Endothelial cell of umbilical vein (primary cell): ENCODE measurements at regions of chr12 and their contacts with region 1.

Region 1: GRCh38 chr12:57782608-57783465 is at the start of gene TSFM:
- DNase-seq: peak; percentile 93
- H3K4me3 ChIP-seq: peak within 1 kb of the TSS; percentile 40 to 63 (median 52)
- H3K27ac ChIP-seq: peak within 1 kb of the TSS; percentile 1
- H3K4me1 ChIP-seq: peaks cover 7% of the 10 kb centered on the region
- H3K27me3 ChIP-seq: no peaks in the 10 kb centered on the region
- CTCF ChIP-seq: peak; percentile 91
- POLR2A ChIP-seq: peak; percentile 82
- total RNA-seq, gene TSFM: 39.3 and 41.8 TPM in 2 replicates

Region 2: GRCh38 chr12:57751788-57752667 is 30.8 kb before region 1 on chr12 and contains the start of gene CDK4:
- CTCF ChIA-PET with region 1: interaction called, 12 read pairs
- POLR2A ChIA-PET with region 1: no interaction called
- dilution Hi-C with region 1: no loop called
- intact Hi-C with region 1: no loop called
- DNase-seq: peak; percentile 100
- H3K4me3 ChIP-seq: peak within 1 kb of the TSS; percentile 19 to 78 (median 61)
- H3K27ac ChIP-seq: peak within 1 kb of the TSS; percentile 68
- H3K4me1 ChIP-seq: peaks cover 17% of the 10 kb centered on the region
- H3K27me3 ChIP-seq: peaks cover 22 to 28% of the 10 kb centered on the region in 2 experiments
- CTCF ChIP-seq: no peak
- POLR2A ChIP-seq: peak; percentile 84
- total RNA-seq, gene CDK4: 156 and 171 TPM in 2 replicates

Region 3: DNA sequence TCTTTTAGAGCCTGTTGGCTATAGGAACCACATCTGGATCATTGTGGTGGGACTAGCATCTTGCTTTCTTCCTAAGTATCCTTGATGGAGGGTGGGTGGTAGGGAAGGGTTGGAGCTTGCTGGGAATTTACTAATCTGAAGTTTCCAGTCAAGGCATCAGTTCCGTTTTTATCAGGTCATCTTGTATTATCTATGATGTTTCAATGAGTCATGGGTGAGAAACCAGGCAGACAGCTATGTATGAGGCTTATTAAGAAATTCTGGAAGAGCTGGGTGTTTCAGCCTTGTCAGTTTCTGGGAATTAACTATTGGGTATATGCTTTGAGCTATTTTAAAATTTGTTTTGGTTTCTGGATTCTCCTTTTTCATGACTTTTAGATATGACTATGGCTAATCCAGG is 11.1 kb after region 1 on chr12:
- CTCF ChIA-PET with region 1: interaction called, 12 read pairs
- POLR2A ChIA-PET with region 1: no interaction called
- dilution Hi-C with region 1: no loop called
- intact Hi-C with region 1: loop called (anchors 1 kb)
- DNase-seq: peak; percentile 19
- H3K4me3 ChIP-seq: no peak overlapping the region
- H3K27ac ChIP-seq: no peak overlapping the region
- H3K4me1 ChIP-seq: no peaks in the 10 kb centered on the region
- H3K27me3 ChIP-seq: no peaks in the 10 kb centered on the region
- CTCF ChIP-seq: no peak
- POLR2A ChIP-seq: no peak

Region 4: DNA sequence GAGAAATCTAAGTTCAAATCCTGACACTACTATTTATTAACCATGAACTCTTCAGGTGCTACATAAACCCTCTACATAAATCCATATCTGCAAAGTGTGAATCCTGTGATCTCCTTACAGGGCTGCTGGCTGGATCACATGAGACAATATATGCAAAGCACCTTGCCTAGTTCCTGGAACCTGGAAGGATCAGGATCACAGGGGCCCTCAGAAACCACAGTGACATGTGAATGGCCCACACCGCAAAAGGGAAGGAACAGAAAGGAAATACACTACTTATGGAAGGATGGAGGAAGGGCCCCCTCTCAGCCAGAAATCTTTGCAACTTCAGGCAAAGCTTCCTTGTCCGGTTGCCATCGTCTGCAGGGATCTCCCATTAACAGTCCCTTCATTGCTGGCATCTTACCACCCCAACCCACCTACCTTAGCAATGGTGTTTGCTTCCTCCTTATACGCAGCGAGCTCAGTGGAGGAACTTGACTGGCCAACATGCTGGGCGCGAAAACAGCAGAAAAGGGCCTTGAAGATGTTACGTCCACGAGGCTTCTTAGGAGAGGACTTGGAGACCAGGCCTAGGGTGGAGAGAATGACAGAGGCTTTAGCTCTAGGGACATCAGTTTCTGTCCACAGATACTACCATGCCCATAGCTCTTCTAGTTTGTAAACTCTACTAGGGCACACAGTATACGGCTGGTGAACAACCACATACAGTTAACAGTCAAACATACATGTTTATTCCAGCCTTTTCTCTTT is 46.4 kb after region 1 on chr12:
- CTCF ChIA-PET with region 1: no interaction called
- POLR2A ChIA-PET with region 1: no interaction called
- dilution Hi-C with region 1: no loop called
- intact Hi-C with region 1: loop called (anchors 2 kb)
- DNase-seq: no peak
- H3K4me3 ChIP-seq: no peak overlapping the region
- H3K27ac ChIP-seq: no peak overlapping the region
- H3K4me1 ChIP-seq: peaks cover 12% of the 10 kb centered on the region
- H3K27me3 ChIP-seq: no peaks in the 10 kb centered on the region
- CTCF ChIP-seq: no peak
- POLR2A ChIP-seq: no peak

Region 5: GRCh38 chr12:57904848-57905811 is 122.3 kb after region 1 on chr12:
- CTCF ChIA-PET with region 1: interaction called, 4 read pairs
- POLR2A ChIA-PET with region 1: no interaction called
- dilution Hi-C with region 1: no loop called
- intact Hi-C with region 1: loop called (anchors 1 kb)
- DNase-seq: peak; percentile 92
- H3K4me3 ChIP-seq: no peak overlapping the region
- H3K27ac ChIP-seq: no peak overlapping the region
- H3K4me1 ChIP-seq: peaks cover 2% of the 10 kb centered on the region
- H3K27me3 ChIP-seq: peaks cover 12 to 14% of the 10 kb centered on the region in 2 experiments
- CTCF ChIP-seq: peak; percentile 100
- POLR2A ChIP-seq: no peak

Region 6: DNA sequence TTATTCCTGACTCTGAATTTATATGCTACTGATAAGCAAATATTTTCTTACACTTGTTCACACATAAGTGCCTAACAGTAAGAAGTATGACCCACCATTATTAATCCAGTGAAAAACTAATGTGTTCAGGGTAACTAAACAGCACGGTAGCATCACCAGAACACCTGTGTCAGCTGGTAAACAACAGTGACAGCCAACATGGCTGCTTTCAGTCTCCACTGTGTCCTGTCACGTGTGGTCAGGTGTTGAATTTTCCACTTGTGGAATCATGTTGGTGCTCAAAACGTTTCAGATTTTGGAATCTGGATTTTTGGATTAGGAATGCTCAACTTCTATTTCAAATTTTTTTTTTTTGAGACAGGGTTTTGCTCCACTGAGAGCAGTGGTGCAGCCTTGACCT is 144.2 kb after region 1 on chr12:
- CTCF ChIA-PET with region 1: no interaction called
- POLR2A ChIA-PET with region 1: no interaction called
- dilution Hi-C with region 1: no loop called
- intact Hi-C with region 1: no loop called
- DNase-seq: no peak
- H3K4me3 ChIP-seq: no peak overlapping the region
- H3K27ac ChIP-seq: no peak overlapping the region
- H3K4me1 ChIP-seq: peaks cover 5% of the 10 kb centered on the region
- H3K27me3 ChIP-seq: no peaks in the 10 kb centered on the region
- CTCF ChIP-seq: no peak
- POLR2A ChIP-seq: no peak